ENCODE measurements at regions of chr1 and their contacts with region 1.

Region 1: DNA sequence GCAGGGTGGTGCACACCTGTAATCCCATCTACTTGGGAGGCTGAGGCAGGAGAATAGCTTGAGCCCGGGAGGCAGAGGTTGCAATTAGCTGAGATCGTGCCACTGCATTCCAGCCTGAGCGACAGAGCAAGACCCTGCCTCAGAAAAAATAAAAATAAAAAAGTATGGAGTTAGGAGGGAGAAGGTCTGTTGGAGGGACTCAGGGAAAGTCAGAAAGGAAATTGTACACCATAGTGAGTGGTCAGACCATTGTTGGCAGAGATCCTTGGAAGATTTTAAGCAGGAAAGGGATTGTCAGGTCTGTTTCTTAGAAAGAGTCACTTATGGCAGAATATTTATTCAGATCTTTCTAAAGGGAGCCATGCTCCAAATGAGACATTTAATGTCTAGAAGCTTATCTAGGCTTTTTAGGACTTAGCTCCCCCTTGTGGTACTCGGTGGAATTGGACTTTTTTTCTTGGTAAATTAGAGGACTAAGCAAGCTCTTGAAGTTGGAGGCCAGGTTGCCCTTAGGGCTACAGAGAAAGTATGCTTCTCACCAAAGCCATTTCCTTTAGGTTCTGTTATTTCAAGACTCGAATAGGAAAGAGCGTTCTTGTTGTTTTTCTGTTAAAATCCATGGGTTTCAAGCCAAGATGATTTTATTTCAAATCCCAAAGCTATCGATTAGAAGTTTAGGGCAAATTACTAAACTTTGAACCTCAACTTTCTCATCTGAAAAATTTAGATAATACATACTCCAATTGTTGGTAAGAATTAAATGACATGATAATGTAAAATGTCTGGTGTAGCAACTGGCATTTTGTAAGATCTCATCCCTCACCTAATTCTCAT is 16.5 kb downstream of the MIA3 start:
- DNase-seq: peak; percentile 65
- ATAC-seq: peak; percentile 82

Region 2: DNA sequence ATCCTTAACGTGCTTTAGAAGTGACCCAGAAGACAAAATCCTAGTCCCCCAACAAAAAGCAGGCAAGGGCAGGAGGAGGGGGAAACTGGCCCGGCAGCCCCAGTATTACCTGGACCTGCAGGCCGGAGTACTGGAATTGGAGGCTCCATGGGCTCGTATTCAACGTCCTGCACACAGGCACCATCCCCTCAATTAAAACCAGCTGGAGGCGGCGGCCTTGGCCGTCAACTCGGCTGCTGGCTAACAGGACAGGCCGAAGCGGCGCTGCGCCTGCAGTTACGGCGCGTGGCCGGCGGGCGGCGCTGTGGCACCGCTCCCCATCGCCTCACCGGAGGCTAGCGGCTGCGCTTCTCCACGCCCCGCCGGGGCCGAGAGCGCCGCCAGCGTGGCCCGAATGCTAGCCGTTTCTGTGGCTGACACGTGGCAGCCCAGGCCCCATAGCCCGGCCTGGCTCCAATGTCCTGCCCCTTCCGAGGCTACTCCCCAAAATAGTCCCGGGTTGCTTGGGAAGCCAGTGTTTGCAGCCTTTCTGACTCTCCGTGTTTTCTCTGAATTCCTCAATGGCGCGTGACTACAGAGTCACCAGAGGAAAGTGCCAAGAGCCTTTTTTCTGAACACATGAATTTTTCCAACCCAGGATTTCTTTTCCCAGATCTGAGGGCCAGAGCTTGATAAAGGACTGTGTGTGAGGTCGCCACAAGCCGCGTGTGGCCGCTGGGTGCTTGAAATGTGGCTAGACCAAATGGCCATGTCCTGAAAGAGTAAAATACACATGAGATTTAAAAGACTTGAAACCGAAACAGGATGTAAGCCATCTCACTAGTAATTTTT is 169.0 kb before region 1 on chr1:
- intact Hi-C with region 1: loop called (anchors 10 kb)
- DNase-seq: peak; percentile 95
- ATAC-seq: peak; percentile 99

Measured in sciatic nerve (tissue), 2 donors.